CD8-positive, alpha-beta T cell (primary cell): ENCODE measurements at regions of chr18 and their contacts with region 1.

Region 1: DNA sequence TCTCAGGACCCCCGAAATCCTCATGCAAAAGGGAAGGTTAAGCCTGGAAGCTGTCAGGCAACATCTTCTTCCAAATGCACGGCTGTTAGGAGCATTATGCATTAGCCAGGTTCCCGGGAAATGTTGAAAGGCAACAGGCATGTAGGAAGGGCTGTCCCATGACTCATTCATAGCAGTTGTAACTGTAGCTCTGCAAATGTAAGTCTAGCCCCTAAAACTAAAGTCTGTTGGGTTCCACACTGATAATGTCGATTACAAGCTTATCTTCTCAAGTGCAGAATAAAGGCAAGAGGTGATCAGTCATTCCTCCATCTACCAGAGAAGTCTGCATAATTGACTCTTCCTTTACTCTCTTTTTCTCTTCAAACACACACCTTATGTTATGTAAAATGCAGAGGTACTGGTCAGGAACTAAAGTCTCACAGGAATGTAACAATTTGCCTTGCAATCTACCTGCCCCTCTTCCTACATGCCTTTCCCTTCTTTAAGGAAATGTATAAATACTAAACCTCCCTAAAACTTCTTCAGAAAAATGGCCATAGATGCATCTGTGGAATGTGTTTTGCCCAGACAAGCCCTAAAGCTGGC is 99.8 kb downstream of the AKAIN1 start:
- DNase-seq: no peak
- ATAC-seq: no peak
- H3K4me3 ChIP-seq: no peak overlapping the region
- H3K4me3 Mint-ChIP-seq: no peak overlapping the region
- H3K27ac ChIP-seq: no peak overlapping the region
- H3K27ac Mint-ChIP-seq: no peak overlapping the region
- H3K4me1 ChIP-seq: no peaks in the 10 kb centered on the region
- H3K4me1 Mint-ChIP-seq: no peaks in the 10 kb centered on the region
- H3K27me3 ChIP-seq: no peaks in the 10 kb centered on the region
- H3K27me3 Mint-ChIP-seq: no peaks in the 10 kb centered on the region
- CTCF ChIP-seq: no peak

Region 2: DNA sequence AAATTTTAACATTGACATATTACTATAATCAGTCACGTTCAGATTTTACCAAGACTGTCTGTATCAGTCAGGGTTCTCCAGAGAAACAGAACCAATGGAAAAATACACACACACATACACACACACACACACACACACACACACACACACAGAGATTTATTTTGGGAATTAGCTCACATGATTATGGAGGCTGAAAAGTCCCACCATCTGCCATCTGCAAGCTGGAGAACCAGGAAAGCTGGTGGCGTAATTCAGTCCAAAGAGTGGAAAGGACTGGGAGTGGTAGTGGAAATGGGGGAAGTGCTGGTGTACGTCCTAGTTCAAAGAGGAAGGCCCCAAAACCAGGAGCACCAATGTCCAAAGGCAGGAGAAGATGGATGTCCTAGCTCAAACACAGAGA is 66.6 kb before region 1 on chr18:
- CTCF ChIA-PET with region 1: no interaction called
- POLR2A ChIA-PET with region 1: no interaction called
- intact Hi-C with region 1: loop called in 1 of 2 experiments (anchors 10 kb)
- DNase-seq: no peak
- ATAC-seq: no peak
- H3K4me3 ChIP-seq: no peak overlapping the region
- H3K4me3 Mint-ChIP-seq: no peak overlapping the region
- H3K27ac ChIP-seq: no peak overlapping the region
- H3K27ac Mint-ChIP-seq: no peak overlapping the region
- H3K4me1 ChIP-seq: no peaks in the 10 kb centered on the region
- H3K4me1 Mint-ChIP-seq: no peaks in the 10 kb centered on the region
- H3K27me3 ChIP-seq: no peaks in the 10 kb centered on the region
- H3K27me3 Mint-ChIP-seq: no peaks in the 10 kb centered on the region
- CTCF ChIP-seq: no peak

Region 3: DNA sequence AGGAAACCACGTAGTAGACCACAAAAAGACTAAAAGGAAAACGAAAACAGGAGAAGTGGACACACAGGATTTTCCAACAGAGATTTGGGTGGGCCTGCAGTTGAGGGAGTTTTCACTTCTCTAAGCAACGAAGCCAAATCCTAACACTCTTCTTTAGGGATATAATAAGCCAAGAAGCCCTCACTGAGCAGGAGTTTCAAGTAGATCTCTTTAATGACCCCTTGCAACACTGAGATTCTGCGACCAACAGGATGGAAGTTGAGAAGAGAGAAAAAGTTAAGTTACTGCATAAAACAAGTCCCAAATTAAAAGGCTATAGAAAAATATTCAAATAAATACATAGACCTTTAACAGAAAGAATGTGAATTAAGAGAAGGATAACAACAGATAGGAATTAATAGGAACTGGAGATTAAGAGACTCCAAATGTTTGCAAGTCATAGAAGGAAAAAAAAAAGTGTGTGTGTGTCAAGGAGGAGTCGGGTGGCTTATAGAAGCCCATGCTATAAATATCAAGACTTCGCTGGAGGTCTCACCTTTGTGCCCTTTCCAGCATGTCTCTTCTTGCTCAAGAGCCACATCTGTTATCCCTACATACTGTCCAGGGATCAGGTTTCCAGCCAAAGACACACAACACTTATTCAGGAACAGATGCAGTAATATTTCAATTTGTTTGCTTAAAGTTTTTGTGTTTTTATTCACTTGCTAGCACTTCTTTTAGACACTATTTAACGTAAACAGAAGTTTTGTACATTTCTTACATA is 1562.9 kb after region 1 on chr18:
- CTCF ChIA-PET with region 1: no interaction called
- POLR2A ChIA-PET with region 1: no interaction called
- intact Hi-C with region 1: no loop called
- DNase-seq: no peak
- ATAC-seq: no peak
- H3K4me3 ChIP-seq: no peak overlapping the region
- H3K4me3 Mint-ChIP-seq: no peak overlapping the region
- H3K27ac ChIP-seq: no peak overlapping the region
- H3K27ac Mint-ChIP-seq: no peak overlapping the region
- H3K4me1 ChIP-seq: no peaks in the 10 kb centered on the region
- H3K4me1 Mint-ChIP-seq: no peaks in the 10 kb centered on the region
- H3K27me3 ChIP-seq: no peaks in the 10 kb centered on the region
- H3K27me3 Mint-ChIP-seq: no peaks in the 10 kb centered on the region
- CTCF ChIP-seq: no peak